ENCODE measurements at regions of chr1 and their contacts with region 1.

Region 1: GRCh38 chr1:23867953-23868556 is at the start of gene FUCA1:
- DNase-seq: peak; percentile 91 to 94
- ATAC-seq: peak; percentile 97 to 99 (median 98)
- H3K4me3 ChIP-seq: peak within 1 kb of the TSS; percentile 49 to 95 (median 85)
- H3K27ac ChIP-seq: peak within 1 kb of the TSS in 9 of 10 donors; percentile 71 to 86 (median 78)
- H3K4me1 ChIP-seq: peaks cover 5 to 45% (median 19%) of the 10 kb centered on the region in 9 donors
- H3K27me3 ChIP-seq: no peaks in the 10 kb centered on the region
- CTCF ChIP-seq: peak; percentile 92 to 99 (median 97)
- total RNA-seq, gene FUCA1: 10.6 to 34.0 (median 15.1) TPM

Region 2: DNA sequence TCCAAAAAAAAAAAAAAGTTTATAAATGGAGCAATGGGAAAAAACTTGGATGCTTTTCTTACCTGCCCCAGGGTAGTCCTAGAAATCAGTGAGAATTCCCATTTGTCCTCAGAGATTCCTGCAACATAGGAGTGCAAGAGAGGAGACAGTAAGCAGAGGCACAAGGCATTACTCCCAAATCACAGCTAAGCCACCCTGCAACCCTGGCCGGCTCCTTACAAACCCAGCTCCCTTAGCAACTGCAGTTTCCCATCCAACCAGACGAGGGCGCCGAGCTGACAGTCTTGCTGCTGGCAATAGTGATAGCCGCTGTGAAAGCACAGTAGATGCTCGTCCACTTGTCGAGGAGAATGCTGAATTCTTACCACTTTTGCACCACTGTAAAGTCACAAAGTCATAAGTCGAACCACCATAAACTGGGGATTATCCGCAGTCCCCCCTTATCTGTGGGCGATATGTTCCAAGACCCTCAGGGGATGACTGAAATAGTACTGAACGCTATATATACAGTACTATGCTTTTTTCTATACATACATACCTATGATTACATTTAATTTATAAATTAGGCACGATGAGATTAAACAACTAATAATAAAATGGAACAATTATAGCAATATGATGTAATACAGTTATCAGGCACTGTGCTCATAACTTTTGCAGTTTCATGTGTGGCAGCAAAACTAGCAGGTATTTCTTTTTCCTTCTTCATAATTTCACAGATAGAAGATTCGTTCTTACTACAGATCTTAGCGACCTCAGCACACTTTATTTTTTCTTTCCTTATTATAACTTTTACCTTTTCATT is 95.8 kb before region 1 on chr1:
- intact Hi-C with region 1: loop called in 7 of 10 experiments (anchors 2 to 10 kb)
- DNase-seq: peak; percentile 86
- ATAC-seq: peak; percentile 65 to 90 (median 82)
- H3K4me3 ChIP-seq: no peak overlapping the region
- H3K27ac ChIP-seq: no peak overlapping the region
- H3K4me1 ChIP-seq: peaks cover 0 to 54% (median 13%) of the 10 kb centered on the region in 9 donors
- H3K27me3 ChIP-seq: no peaks in the 10 kb centered on the region
- CTCF ChIP-seq: peak; percentile 85 to 96 (median 92)

Region 3: GRCh38 chr1:23800400-23801337 is 67.4 kb before region 1 on chr1 and contains the start of gene GALE:
- intact Hi-C with region 1: loop called in 1 of 10 experiments (anchors 10 kb)
- DNase-seq: peak; percentile 98
- ATAC-seq: peak; percentile 94 to 97 (median 96)
- H3K4me3 ChIP-seq: peak within 1 kb of the TSS; percentile 72 to 98 (median 89)
- H3K27ac ChIP-seq: peak within 1 kb of the TSS; percentile 78 to 98 (median 94)
- H3K4me1 ChIP-seq: peaks cover 11 to 26% (median 22%) of the 10 kb centered on the region in 9 donors
- H3K27me3 ChIP-seq: no peaks in the 10 kb centered on the region
- CTCF ChIP-seq: no peak
- total RNA-seq, gene GALE: 5.3 to 14.1 (median 7.9) TPM

Region 4: DNA sequence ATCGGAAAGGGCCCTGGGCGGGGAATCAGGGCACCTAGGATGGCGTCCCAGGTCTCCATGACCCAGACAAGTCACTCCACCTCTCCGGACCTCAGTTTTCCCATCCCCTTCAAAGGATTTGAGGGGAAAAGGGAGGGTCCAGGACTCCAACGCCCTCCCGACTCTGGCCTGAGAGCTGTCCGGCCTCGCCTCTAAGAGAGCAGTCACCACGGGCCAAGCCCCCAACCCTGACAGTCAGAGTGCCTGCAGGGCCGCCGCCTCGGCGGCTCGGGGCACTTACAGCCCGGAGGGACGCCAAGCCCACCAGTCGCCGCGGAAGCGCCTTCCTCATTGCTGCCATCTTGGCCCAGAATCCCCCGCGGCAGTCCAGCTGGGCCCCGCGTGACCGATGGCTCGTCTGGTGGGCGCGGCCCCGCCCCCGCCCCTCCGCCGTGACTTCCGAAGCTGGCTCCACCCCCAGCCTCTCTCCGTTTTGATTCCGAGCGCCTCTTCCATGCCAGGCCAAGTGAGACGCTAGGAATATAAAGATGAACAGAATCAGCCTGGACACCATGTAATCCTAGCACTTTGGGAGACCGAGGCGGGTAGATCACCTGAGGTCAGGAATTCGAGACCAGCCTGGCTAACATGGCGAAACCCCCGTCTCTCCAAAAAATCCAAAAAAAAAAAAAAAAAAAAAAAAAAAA is 42.8 kb before region 1 on chr1 and contains the start of gene HMGCL:
- intact Hi-C with region 1: loop called in 2 of 10 experiments (anchors 5 kb)
- DNase-seq: peak; percentile 90 to 93
- ATAC-seq: peak; percentile 98 to 100 (median 99)
- H3K4me3 ChIP-seq: peak within 1 kb of the TSS; percentile 74 to 99 (median 92)
- H3K27ac ChIP-seq: peak within 1 kb of the TSS; percentile 87 to 99 (median 96)
- H3K4me1 ChIP-seq: peaks cover 2 to 22% (median 14%) of the 10 kb centered on the region in 9 donors
- H3K27me3 ChIP-seq: no peaks in the 10 kb centered on the region
- CTCF ChIP-seq: no peak
- total RNA-seq, gene HMGCL: 27.8 to 44.3 (median 40.1) TPM

Region 5: DNA sequence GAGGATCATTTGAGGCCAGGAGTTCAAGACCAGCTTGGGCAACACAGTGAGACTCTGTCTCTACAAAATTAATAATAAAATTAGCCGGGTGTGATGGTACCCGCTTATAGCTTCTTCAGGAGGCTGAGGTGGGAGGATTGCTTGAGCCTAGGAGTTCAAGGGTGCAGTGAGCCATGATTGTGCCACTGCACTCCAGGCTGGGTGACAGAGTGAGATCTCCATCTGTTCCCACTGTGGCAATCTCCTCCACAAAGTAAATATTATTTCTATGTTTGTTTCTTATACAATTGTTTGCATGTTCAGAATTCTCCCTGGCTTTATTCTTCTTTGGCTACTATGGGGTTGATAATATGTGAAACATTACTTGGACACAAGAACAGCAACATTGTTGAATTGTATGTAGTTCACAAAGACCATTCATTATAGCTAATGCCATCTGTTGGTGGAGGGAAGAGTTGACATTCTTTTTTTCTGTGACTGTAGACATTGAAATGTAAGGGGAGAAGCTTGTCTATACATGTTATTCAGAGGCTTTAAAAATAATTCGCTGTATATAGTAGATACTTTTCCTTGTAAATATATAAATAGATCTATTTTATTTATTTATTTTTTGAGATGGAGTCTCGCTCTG is 159.9 kb after region 1 on chr1:
- intact Hi-C with region 1: loop called in 2 of 10 experiments (anchors 5 to 10 kb)
- DNase-seq: no peak
- ATAC-seq: peak in 7 of 8 donors; percentile 60 to 83 (median 75)
- H3K4me3 ChIP-seq: no peak overlapping the region
- H3K27ac ChIP-seq: no peak overlapping the region
- H3K4me1 ChIP-seq: peaks cover 0 to 10% (median 0%) of the 10 kb centered on the region in 9 donors
- H3K27me3 ChIP-seq: no peaks in the 10 kb centered on the region
- CTCF ChIP-seq: peak; percentile 53 to 85 (median 64)